ENCODE measurements at regions of chr10 and their contacts with region 1.

Region 1: GRCh38 chr10:50653142-50653541 is 29.4 kb upstream of the SGMS1 start:
- DNase-seq: peak in 5 of 9 donors; percentile 18 to 48 (median 30)
- ATAC-seq: peak; percentile 75
- H3K4me3 ChIP-seq: no peak overlapping the region
- H3K4me3 Mint-ChIP-seq: peak overlapping the region in 6 of 10 donors; percentile 0 to 55 (median 15)
- H3K27ac ChIP-seq: no peak overlapping the region
- H3K27ac Mint-ChIP-seq: peak overlapping the region in 1 of 9 donors; percentile 55
- H3K4me1 ChIP-seq: peaks cover 0 to 13% of the 10 kb centered on the region in 2 donors
- H3K4me1 Mint-ChIP-seq: peaks cover 11 to 25% (median 14%) of the 10 kb centered on the region in 7 donors
- H3K27me3 ChIP-seq: no peaks in the 10 kb centered on the region
- H3K27me3 Mint-ChIP-seq: peaks cover 0 to 13% (median 0%) of the 10 kb centered on the region in 5 donors

Region 2: DNA sequence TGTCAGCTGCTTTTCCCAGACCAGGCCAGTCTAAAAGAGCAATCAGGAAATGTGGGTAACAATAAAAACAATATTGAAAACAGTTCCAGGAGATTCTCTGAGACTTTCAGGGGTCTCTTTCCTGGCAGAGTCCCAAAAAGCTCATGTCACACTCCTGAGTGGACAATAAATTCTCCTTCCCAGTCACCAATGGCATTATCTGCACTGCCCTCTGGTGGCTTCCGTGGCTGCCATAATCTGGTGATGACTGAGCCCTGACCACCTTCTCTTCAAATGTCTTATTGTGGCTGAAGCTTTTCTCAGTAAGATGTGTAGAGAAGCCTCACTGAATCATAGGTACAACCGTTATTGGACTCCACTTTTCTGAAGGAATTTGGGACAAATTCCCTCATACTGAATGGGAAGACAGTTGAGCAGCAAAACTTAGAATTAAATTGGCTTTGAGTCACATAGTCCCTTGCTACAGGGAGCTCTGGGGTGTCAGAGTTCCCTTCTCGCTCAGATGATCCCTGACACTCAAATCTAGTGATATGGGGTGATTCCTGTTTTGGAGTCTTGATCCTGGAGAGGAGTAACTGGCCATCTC is 377.4 kb before region 1 on chr10:
- CTCF ChIA-PET with region 1: no interaction called
- POLR2A ChIA-PET with region 1: no interaction called
- intact Hi-C with region 1: loop called in 1 of 2 experiments (anchors 10 kb)
- DNase-seq: peak in 3 of 9 donors; percentile 2 to 29 (median 4)
- ATAC-seq: peak; percentile 46
- H3K4me3 ChIP-seq: no peak overlapping the region
- H3K4me3 Mint-ChIP-seq: no peak overlapping the region
- H3K27ac ChIP-seq: no peak overlapping the region
- H3K27ac Mint-ChIP-seq: no peak overlapping the region
- H3K4me1 ChIP-seq: no peaks in the 10 kb centered on the region
- H3K4me1 Mint-ChIP-seq: no peaks in the 10 kb centered on the region
- H3K27me3 ChIP-seq: peaks cover 0 to 4% of the 10 kb centered on the region in 2 donors
- H3K27me3 Mint-ChIP-seq: peaks cover 18 to 44% (median 24%) of the 10 kb centered on the region in 5 donors

Region 3: GRCh38 chr10:50291261-50291850 is 361.8 kb before region 1 on chr10:
- CTCF ChIA-PET with region 1: no interaction called
- POLR2A ChIA-PET with region 1: no interaction called
- intact Hi-C with region 1: loop called in 1 of 2 experiments (anchors 2 kb)
- DNase-seq: no peak
- ATAC-seq: no peak
- H3K4me3 ChIP-seq: no peak overlapping the region
- H3K4me3 Mint-ChIP-seq: no peak overlapping the region
- H3K27ac ChIP-seq: no peak overlapping the region
- H3K27ac Mint-ChIP-seq: no peak overlapping the region
- H3K4me1 ChIP-seq: no peaks in the 10 kb centered on the region
- H3K4me1 Mint-ChIP-seq: peaks cover 0 to 2% (median 0%) of the 10 kb centered on the region in 7 donors
- H3K27me3 ChIP-seq: no peaks in the 10 kb centered on the region
- H3K27me3 Mint-ChIP-seq: peaks cover 0 to 8% (median 5%) of the 10 kb centered on the region in 5 donors

Region 4: DNA sequence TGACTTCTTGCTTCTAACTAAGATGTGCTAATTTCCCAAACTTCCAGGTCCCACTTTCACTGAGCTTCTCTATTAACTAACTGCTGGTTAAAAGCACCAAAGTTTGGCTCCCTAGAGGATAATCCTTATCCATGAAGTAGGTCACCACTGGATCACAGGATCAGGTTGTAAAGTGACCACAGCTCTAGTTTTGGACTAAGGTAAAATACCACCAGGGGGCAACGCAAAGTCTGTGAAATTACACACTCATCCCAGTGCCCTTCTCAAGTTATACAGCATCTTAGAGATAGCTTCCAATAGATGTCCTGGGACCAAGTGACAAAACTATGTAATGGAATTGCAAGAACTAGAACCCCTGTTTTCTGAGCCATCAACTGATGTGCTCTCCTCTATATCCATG is 285.4 kb before region 1 on chr10:
- CTCF ChIA-PET with region 1: interaction called, 6 read pairs
- POLR2A ChIA-PET with region 1: no interaction called
- intact Hi-C with region 1: loop called in 1 of 2 experiments (anchors 1 kb)
- DNase-seq: peak in 1 of 9 donors; percentile 5
- ATAC-seq: peak; percentile 31
- H3K4me3 ChIP-seq: no peak overlapping the region
- H3K4me3 Mint-ChIP-seq: no peak overlapping the region
- H3K27ac ChIP-seq: no peak overlapping the region
- H3K27ac Mint-ChIP-seq: no peak overlapping the region
- H3K4me1 ChIP-seq: no peaks in the 10 kb centered on the region
- H3K4me1 Mint-ChIP-seq: peaks cover 2 to 18% (median 15%) of the 10 kb centered on the region in 7 donors
- H3K27me3 ChIP-seq: no peaks in the 10 kb centered on the region
- H3K27me3 Mint-ChIP-seq: no peaks in the 10 kb centered on the region

Region 5: GRCh38 chr10:50554995-50555568 is 98.1 kb before region 1 on chr10:
- CTCF ChIA-PET with region 1: interaction called, 6 read pairs
- POLR2A ChIA-PET with region 1: no interaction called
- intact Hi-C with region 1: loop called (anchors 1 to 2 kb)
- DNase-seq: peak in 3 of 9 donors; percentile 8 to 12 (median 9)
- ATAC-seq: no peak
- H3K4me3 ChIP-seq: no peak overlapping the region
- H3K4me3 Mint-ChIP-seq: no peak overlapping the region
- H3K27ac ChIP-seq: no peak overlapping the region
- H3K27ac Mint-ChIP-seq: no peak overlapping the region
- H3K4me1 ChIP-seq: no peaks in the 10 kb centered on the region
- H3K4me1 Mint-ChIP-seq: peaks cover 0 to 72% (median 46%) of the 10 kb centered on the region in 7 donors
- H3K27me3 ChIP-seq: no peaks in the 10 kb centered on the region
- H3K27me3 Mint-ChIP-seq: no peaks in the 10 kb centered on the region

Region 6: GRCh38 chr10:50561816-50562215 is 91.3 kb before region 1 on chr10:
- CTCF ChIA-PET with region 1: interaction called, 6 read pairs
- POLR2A ChIA-PET with region 1: no interaction called
- intact Hi-C with region 1: loop called (anchors 1 to 2 kb)
- DNase-seq: peak in 5 of 9 donors; percentile 12 to 38 (median 23)
- ATAC-seq: peak; percentile 27
- H3K4me3 ChIP-seq: no peak overlapping the region
- H3K4me3 Mint-ChIP-seq: peak overlapping the region in 1 of 10 donors; percentile 20
- H3K27ac ChIP-seq: no peak overlapping the region
- H3K27ac Mint-ChIP-seq: peak overlapping the region in 2 of 9 donors; percentile 6 to 32
- H3K4me1 ChIP-seq: no peaks in the 10 kb centered on the region
- H3K4me1 Mint-ChIP-seq: peaks cover 0 to 54% (median 30%) of the 10 kb centered on the region in 7 donors
- H3K27me3 ChIP-seq: no peaks in the 10 kb centered on the region
- H3K27me3 Mint-ChIP-seq: no peaks in the 10 kb centered on the region

Region 7: GRCh38 chr10:50636618-50637579 is 16.2 kb before region 1 on chr10:
- CTCF ChIA-PET with region 1: interaction called, 6 read pairs
- POLR2A ChIA-PET with region 1: no interaction called
- intact Hi-C with region 1: loop called in 1 of 2 experiments (anchors 2 kb)
- DNase-seq: peak in 3 of 9 donors; percentile 19 to 34 (median 29)
- ATAC-seq: peak; percentile 84
- H3K4me3 ChIP-seq: peak overlapping the region; percentile 41
- H3K4me3 Mint-ChIP-seq: peak overlapping the region; percentile 52 to 78 (median 72)
- H3K27ac ChIP-seq: peak overlapping the region; percentile 11
- H3K27ac Mint-ChIP-seq: peak overlapping the region; percentile 20 to 73 (median 55)
- H3K4me1 ChIP-seq: peaks cover 24 to 27% of the 10 kb centered on the region in 2 donors
- H3K4me1 Mint-ChIP-seq: peaks cover 22 to 39% (median 35%) of the 10 kb centered on the region in 7 donors
- H3K27me3 ChIP-seq: no peaks in the 10 kb centered on the region
- H3K27me3 Mint-ChIP-seq: peaks cover 0 to 56% (median 0%) of the 10 kb centered on the region in 5 donors

Region 8: GRCh38 chr10:50739618-50740292 is 86.6 kb after region 1 on chr10 and contains the start of gene ASAH2B:
- CTCF ChIA-PET with region 1: no interaction called
- POLR2A ChIA-PET with region 1: no interaction called
- intact Hi-C with region 1: no loop called
- DNase-seq: peak; percentile 42 to 79 (median 72)
- ATAC-seq: peak; percentile 77
- H3K4me3 ChIP-seq: peak within 1 kb of the TSS; percentile 92
- H3K4me3 Mint-ChIP-seq: peak within 1 kb of the TSS; percentile 86 to 99 (median 98)
- H3K27ac ChIP-seq: peak within 1 kb of the TSS; percentile 66
- H3K27ac Mint-ChIP-seq: peak within 1 kb of the TSS; percentile 89 to 97 (median 93)
- H3K4me1 ChIP-seq: no peaks in the 10 kb centered on the region
- H3K4me1 Mint-ChIP-seq: peaks cover 18 to 43% (median 39%) of the 10 kb centered on the region in 7 donors
- H3K27me3 ChIP-seq: no peaks in the 10 kb centered on the region
- H3K27me3 Mint-ChIP-seq: peaks cover 0 to 24% (median 0%) of the 10 kb centered on the region in 5 donors
- total RNA-seq, gene ASAH2B: 1.7 to 3.9 (median 2.3) TPM

Measured in naive thymus-derived CD4-positive, alpha-beta T cell (primary cell).